ENCODE measurements at regions of chr14 and their contacts with region 1.

Region 1: DNA sequence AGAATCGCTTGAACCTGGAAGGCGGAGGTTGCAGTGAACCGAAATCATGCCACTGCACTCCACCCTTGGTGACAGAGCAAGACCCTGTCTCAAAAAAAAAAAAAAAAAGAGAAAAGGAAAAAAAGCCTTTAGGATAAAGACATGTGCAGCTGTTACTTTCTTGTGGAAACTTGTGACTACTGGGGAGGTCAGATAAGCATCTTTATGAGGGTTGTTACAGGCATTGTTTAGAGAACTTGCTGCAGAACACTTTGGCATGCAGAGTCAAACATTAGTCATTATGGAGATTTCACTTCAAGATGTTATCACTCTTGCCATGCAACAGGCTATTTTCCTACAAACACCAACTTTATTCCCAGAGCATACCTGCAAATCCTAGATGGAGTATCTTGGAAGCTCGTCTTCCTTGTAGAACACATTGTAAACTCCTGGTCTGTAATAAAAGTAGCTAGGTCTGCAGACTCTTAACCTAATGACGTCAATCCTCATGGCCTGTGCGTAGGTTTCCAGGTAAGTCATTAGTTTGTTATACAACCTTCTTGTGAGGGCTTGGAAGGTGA is 36.2 kb upstream of the WDR89 start:
- DNase-seq: peak; percentile 51 to 97
- H3K4me3 ChIP-seq: no peak overlapping the region
- H3K27ac ChIP-seq: peak overlapping the region; percentile 29
- H3K4me1 ChIP-seq: peaks cover 26% of the 10 kb centered on the region
- H3K27me3 ChIP-seq: no peaks in the 10 kb centered on the region
- CTCF ChIP-seq: no peak

Region 2: DNA sequence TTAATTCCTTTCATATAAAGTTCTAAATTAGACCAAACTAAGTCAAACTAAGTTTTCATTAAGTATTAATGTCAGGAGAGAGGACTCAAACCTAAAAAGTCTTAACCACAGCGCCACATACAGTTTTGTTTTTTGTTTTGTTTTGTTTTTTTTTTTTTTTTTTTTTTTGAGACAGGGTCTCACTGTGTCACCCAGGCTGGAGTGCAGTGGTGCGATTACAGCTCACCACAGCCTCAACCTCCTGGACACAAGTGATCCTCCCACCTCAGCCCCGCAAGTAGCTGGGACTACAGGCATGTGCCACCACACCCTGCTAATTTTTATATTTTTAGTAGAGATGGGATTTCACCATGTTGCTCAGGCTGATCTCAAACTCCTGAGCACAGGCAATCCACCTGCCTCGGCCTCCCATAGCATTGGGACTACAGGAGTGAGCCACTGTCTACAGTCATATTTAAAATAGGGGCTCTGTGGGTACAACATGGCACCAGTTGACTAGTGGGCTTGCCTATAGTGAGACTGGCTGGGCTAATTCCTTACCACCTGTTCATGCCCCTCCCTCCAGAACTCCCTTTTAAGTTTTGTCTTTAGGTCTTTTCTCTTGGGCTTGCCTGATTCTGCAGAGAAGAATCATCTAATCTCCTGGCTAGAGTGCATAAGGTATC is 244.9 kb before region 1 on chr14:
- CTCF ChIA-PET with region 1: no interaction called
- POLR2A ChIA-PET with region 1: interaction called, 13 read pairs
- intact Hi-C with region 1: no loop called
- DNase-seq: no peak
- H3K4me3 ChIP-seq: no peak overlapping the region
- H3K27ac ChIP-seq: no peak overlapping the region
- H3K4me1 ChIP-seq: peaks cover 18% of the 10 kb centered on the region
- H3K27me3 ChIP-seq: no peaks in the 10 kb centered on the region
- CTCF ChIP-seq: no peak

Region 3: DNA sequence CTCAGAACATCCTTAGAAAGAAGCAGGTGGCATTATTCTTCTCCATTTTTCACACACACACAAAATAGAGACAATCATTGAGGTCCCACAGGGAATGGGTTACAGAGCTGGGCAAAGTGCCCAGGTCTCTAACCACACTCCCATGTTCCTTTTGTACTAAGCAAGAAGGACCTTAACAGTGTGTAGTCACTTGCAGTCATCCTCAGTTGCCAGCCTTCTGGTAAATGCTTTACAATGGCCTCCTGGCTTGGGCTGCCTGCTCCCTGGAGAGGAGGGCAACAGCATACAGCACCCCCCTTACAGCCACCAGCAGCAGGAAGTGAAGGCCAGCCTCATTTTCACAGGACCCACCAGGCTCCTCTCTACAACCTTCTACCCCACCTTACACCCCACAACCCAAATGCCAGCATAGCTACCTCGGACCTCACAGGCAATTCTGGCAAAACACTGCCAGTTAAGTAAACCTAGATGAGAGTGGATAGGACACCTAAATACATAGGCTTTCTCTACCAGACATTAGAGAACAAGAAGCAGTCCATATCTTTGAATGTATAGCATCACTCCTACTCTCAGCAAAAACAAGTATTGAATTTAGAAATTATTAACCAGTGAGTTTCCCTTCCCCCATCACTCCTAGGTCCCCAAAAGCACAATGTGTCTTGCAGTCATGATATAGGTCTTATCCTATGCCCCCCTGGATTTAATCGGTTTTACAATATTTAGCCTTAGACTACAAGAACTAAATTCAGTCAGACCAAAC is 222.9 kb before region 1 on chr14:
- CTCF ChIA-PET with region 1: no interaction called
- POLR2A ChIA-PET with region 1: interaction called, 37 read pairs
- intact Hi-C with region 1: no loop called
- DNase-seq: no peak
- H3K4me3 ChIP-seq: no peak overlapping the region
- H3K27ac ChIP-seq: no peak overlapping the region
- H3K4me1 ChIP-seq: no peaks in the 10 kb centered on the region
- H3K27me3 ChIP-seq: no peaks in the 10 kb centered on the region
- CTCF ChIP-seq: no peak

Region 4: DNA sequence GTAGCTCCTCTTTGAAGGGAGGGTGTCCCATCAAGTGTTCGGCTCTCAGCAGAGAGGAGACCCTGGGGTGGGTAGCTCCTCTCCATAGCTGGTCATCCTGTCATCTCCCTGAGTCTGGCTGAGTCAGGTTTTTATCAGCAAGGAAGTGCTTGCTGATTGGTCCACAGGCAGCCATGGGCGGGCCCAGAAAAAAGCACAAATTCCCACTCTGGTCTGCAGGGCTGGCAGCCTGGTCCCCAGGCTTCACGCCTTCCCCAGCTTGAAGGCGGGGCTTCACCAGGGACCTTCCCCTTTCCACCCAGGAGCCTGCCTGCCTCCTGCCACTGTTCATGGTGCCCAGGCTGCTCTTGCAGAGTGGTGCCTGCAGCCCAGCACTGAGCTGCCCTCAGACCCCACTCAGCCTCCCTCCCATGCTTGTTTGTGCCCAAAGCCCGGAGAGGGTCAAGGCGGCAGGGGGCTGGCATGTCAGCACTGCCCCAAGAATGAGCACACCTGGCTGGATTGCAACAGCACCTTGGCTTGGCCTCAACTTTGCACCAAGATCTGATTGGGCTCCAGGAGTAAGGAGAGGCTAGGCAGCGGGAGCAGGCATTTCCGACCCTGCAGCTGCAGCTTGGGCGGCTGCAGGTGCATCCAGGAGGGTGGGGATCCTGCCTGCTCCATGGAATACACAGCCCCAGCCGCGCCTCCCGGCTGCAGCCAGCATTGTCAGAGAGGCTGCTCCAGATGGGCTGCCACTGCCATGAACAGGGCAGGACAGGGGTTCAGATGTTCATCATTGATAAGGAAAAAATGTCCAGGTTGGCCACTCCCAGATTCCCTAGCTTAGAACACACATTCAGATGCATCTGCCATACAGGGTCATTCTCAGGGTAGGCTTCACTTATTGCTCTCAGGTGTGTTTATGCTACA is 14.2 kb before region 1 on chr14:
- CTCF ChIA-PET with region 1: no interaction called
- POLR2A ChIA-PET with region 1: interaction called, 3 read pairs
- intact Hi-C with region 1: loop called (anchors 1 kb)
- DNase-seq: peak; percentile 88 to 91
- H3K4me3 ChIP-seq: no peak overlapping the region
- H3K27ac ChIP-seq: peak overlapping the region; percentile 39
- H3K4me1 ChIP-seq: peaks cover 47% of the 10 kb centered on the region
- H3K27me3 ChIP-seq: no peaks in the 10 kb centered on the region
- CTCF ChIP-seq: no peak

Measured in PC-9 (cell line).